H1 (cell line): ENCODE measurements at regions of chr1 and their contacts with region 1.

Region 1: GRCh38 chr1:174982971-174983689 is 16.6 kb upstream of the CACYBP start:
- DNase-seq: no peak
- H3K4me3 ChIP-seq: no peak overlapping the region
- H3K27ac ChIP-seq: no peak overlapping the region
- H3K4me1 ChIP-seq: no peaks in the 10 kb centered on the region
- H3K27me3 ChIP-seq: no peaks in the 10 kb centered on the region
- CTCF ChIP-seq: peak in 2 of 3 experiments; percentile 18 to 47; a peak in 2 of 4 replicates
- EP300 ChIP-seq: no peak
- POLR2A ChIP-seq: no peak
- RAD21 ChIP-seq: peak in 1 of 2 experiments; percentile 34; a peak in 2 of 4 replicates

Region 2: GRCh38 chr1:174491606-174492005 is 491.5 kb before region 1 on chr1:
- CTCF ChIA-PET with region 1: no interaction called
- POLR2A ChIA-PET with region 1: no interaction called
- DNase-seq: no peak
- H3K4me3 ChIP-seq: no peak overlapping the region
- H3K27ac ChIP-seq: no peak overlapping the region
- H3K4me1 ChIP-seq: no peaks in the 10 kb centered on the region
- H3K27me3 ChIP-seq: no peaks in the 10 kb centered on the region
- CTCF ChIP-seq: no peak
- EP300 ChIP-seq: no peak
- POLR2A ChIP-seq: no peak
- RAD21 ChIP-seq: no peak

Region 3: GRCh38 chr1:174769961-174770549 is 213.1 kb before region 1 on chr1:
- CTCF ChIA-PET with region 1: interaction called, 66 read pairs
- POLR2A ChIA-PET with region 1: no interaction called
- DNase-seq: no peak
- H3K4me3 ChIP-seq: no peak overlapping the region
- H3K27ac ChIP-seq: no peak overlapping the region
- H3K4me1 ChIP-seq: peaks cover 0 to 4% (median 0%) of the 10 kb centered on the region in 4 experiments; a peak in 2 of 7 replicates
- H3K27me3 ChIP-seq: no peaks in the 10 kb centered on the region
- CTCF ChIP-seq: peak in 2 of 3 experiments; percentile 43 to 67; a peak in 2 of 4 replicates
- EP300 ChIP-seq: no peak
- POLR2A ChIP-seq: no peak
- RAD21 ChIP-seq: peak; percentile 81 to 93

Region 4: GRCh38 chr1:174883409-174883808 is 99.7 kb before region 1 on chr1:
- CTCF ChIA-PET with region 1: interaction called, 21 read pairs
- POLR2A ChIA-PET with region 1: interaction called, 3 read pairs
- DNase-seq: no peak
- H3K4me3 ChIP-seq: no peak overlapping the region
- H3K27ac ChIP-seq: no peak overlapping the region
- H3K4me1 ChIP-seq: peaks cover 0 to 6% (median 2%) of the 10 kb centered on the region in 4 experiments; a peak in 2 of 7 replicates
- H3K27me3 ChIP-seq: no peaks in the 10 kb centered on the region
- CTCF ChIP-seq: peak in 1 of 3 experiments; percentile 25; a peak in 1 of 4 replicates
- EP300 ChIP-seq: no peak
- POLR2A ChIP-seq: no peak
- RAD21 ChIP-seq: peak; percentile 46 to 60

Region 5: GRCh38 chr1:175089136-175089718 is 106.1 kb after region 1 on chr1:
- CTCF ChIA-PET with region 1: no interaction called
- POLR2A ChIA-PET with region 1: no interaction called
- DNase-seq: no peak
- H3K4me3 ChIP-seq: no peak overlapping the region
- H3K27ac ChIP-seq: no peak overlapping the region
- H3K4me1 ChIP-seq: no peaks in the 10 kb centered on the region
- H3K27me3 ChIP-seq: no peaks in the 10 kb centered on the region
- CTCF ChIP-seq: no peak
- EP300 ChIP-seq: no peak
- POLR2A ChIP-seq: no peak
- RAD21 ChIP-seq: no peak